Activated CD4-positive, alpha-beta T cell treated with anti-CD3 and anti-CD28 coated beads for 36 hours (primary cell): ENCODE measurements at regions of chr20 and their contacts with region 1.

Region 1: DNA sequence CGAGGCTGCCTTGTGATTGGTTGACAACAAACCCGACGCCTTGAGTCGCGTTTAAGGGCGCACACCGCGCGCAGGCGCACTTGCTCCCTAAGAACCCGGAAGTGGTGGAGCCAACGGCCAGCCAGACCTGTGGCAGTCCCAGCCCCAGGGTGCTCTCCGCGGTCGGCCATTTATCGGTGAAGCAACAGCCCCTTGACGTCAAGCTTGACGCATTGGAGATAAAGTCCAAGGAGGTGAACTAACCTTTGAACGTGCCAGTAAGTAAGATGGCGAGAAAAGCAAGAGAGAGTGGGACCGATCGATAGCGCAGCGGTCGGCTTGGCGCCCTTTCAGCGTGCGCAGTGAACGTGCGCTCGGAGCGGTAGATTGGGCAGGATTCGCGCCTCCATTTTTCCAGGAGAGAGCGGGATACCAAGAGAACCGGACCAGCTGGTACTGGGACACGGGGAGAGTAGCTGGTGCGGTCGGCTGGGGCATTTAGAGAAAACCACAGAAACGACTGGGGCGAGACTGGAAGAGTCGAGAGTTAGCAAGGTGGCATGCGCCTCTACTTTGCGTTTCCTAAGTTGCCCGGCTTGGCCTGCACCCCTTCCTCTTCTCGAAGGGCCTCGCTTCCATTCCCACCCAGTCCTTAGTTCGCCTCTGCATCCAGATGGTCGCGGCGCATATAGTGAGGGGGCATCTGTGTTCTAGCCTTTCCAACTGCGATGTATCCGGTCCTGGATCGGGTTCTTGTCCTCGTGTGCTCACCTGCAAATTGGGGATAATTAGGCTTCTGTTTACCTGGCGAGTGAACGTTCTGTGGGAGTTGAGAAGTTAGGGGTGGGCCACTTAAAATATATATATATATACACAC is at the start of gene CSTF1:
- DNase-seq: peak; percentile 100
- ATAC-seq: peak; percentile 90
- H3K4me3 Mint-ChIP-seq: no peak within 1 kb of the TSS
- H3K27ac Mint-ChIP-seq: no peak within 1 kb of the TSS
- H3K4me1 Mint-ChIP-seq: peaks cover 43% of the 10 kb centered on the region
- H3K27me3 Mint-ChIP-seq: no peaks in the 10 kb centered on the region
- total RNA-seq, gene CSTF1: 62.0 to 84.2 TPM

Region 2: DNA sequence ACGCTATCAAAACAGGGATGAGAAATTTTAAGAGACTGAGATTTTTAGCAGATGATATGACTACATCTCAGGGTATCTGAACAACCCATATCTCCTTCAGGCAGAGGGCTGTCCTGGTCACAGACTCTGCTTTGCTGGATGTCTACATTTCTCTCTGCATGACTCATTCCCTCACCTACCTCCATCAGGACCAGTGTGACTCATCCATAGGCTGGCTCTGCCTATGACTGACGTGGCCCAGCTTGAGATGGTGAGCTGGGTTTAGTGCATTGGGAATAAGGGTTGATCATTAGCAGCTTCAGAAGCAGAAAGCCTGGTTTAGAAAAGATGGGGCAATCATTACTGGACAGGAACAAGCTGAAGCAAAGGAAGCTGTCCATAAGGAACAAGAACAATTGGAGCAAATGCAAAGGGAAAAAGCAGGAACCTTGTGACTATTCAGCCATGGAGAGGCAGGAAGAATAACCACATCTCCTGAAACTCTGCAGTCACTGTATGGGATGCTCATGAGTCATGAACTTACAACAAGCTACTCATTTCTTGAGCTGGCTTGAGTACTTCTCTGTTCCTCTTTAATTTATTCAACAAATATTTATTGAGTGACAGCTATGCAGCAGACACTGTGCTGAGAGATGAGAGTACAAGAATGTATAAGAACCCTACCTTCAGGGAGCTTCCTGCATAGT is 300.7 kb before region 1 on chr20:
- CTCF ChIA-PET with region 1: no interaction called
- POLR2A ChIA-PET with region 1: no interaction called
- intact Hi-C with region 1: no loop called
- DNase-seq: peak; percentile 6
- ATAC-seq: no peak
- H3K4me3 Mint-ChIP-seq: no peak overlapping the region
- H3K27ac Mint-ChIP-seq: no peak overlapping the region
- H3K4me1 Mint-ChIP-seq: no peaks in the 10 kb centered on the region
- H3K27me3 Mint-ChIP-seq: peaks cover 4% of the 10 kb centered on the region

Region 3: DNA sequence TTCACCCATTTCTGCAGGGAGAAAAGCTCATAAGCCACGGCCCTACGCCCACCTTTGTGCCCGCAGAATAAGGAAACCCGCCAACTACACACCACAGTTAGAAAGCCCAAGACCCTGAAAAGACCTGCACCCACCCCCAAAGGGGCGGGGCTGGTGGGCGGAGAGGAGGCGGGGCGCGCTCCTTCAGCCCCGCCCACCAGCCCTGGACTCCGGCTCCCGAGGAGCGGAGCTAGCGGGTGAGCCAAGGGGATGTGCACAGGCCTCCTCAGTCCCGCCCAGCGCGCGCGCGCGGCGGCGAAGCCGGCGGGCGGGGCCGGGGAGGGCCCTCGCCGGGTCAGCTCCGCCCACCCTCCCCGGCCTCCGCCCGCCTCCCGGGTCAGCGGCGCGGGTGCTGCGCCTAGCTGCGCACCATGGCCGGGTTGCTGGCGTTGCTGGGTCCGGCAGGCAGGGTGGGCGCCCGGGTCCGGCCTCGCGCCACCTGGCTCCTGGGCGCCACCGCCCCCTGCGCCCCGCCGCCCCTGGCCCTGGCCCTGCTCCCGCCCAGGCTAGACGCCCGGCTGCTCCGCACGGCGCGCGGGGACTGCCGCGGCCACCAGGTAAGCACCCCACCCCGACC is 33.8 kb before region 1 on chr20 and contains the start of gene FAM210B:
- CTCF ChIA-PET with region 1: interaction called, 3 read pairs
- POLR2A ChIA-PET with region 1: interaction called, 4 read pairs
- intact Hi-C with region 1: loop called in 1 of 2 experiments (anchors 1 kb)
- DNase-seq: peak; percentile 90
- ATAC-seq: peak; percentile 100
- H3K4me3 Mint-ChIP-seq: peak within 1 kb of the TSS; percentile 82
- H3K27ac Mint-ChIP-seq: peak within 1 kb of the TSS; percentile 58
- H3K4me1 Mint-ChIP-seq: peaks cover 17% of the 10 kb centered on the region
- H3K27me3 Mint-ChIP-seq: no peaks in the 10 kb centered on the region
- total RNA-seq, gene FAM210B: 4.5 to 4.8 TPM